ENCODE measurements at regions of chr19 and their contacts with region 1.

Region 1: GRCh38 chr19:18152444-18152816 is 533 bp upstream of the PIK3R2 start:
- DNase-seq: peak; percentile 98
- H3K4me3 ChIP-seq: peak overlapping the region; percentile 41 to 94 (median 85)
- H3K27ac ChIP-seq: peak overlapping the region; percentile 87 to 98 (median 95)
- H3K4me1 ChIP-seq: peaks cover 0 to 49% (median 43%) of the 10 kb centered on the region in 4 donors
- H3K27me3 ChIP-seq: no peaks in the 10 kb centered on the region
- CTCF ChIP-seq: peak; percentile 52 to 74 (median 60)
- EP300 ChIP-seq: no peak
- POLR2A ChIP-seq: no peak

Region 2: GRCh38 chr19:18083929-18084684 is 68.3 kb before region 1 on chr19:
- intact Hi-C with region 1: no loop called
- DNase-seq: no peak
- H3K4me3 ChIP-seq: no peak overlapping the region
- H3K27ac ChIP-seq: no peak overlapping the region
- H3K4me1 ChIP-seq: no peaks in the 10 kb centered on the region
- H3K27me3 ChIP-seq: no peaks in the 10 kb centered on the region
- CTCF ChIP-seq: no peak
- EP300 ChIP-seq: no peak
- POLR2A ChIP-seq: no peak

Region 3: DNA sequence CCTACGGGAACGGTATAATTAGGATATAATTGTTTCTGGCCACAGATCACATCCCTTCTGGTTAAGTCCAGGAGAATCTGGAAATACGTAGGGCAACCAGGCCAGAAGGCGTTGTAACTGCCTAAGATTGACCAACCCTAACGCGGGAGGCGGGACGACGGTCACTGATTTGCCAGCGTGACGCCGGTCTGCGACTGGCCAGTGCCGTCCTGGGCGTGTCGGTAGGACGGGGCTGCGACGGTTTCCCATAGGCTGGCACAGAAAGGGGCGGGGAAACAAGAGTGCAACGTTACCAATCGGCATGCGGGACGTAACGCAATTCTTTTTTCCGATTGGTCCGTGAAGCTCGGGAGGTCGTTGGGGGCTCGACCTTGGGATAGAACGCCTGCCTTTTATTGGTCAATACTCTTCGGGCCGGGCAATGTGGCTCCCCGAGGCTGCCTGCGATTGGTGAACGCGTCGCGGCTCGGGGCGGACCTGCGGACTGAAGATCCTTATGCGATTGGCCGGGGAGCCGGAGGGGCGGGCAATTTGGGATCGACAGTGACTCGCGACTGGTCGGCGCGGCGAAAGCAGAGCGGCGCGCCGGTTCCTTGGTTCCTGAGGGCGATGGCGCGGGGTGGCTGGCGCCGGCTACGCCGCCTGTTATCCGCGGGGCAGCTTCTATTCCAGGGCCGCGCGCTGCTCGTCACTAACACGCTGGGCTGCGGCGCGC is 40.4 kb after region 1 on chr19 and contains the start of gene MPV17L2:
- intact Hi-C with region 1: loop called (anchors 5 kb)
- DNase-seq: peak; percentile 100
- H3K4me3 ChIP-seq: peak within 1 kb of the TSS; percentile 75 to 91 (median 84)
- H3K27ac ChIP-seq: peak within 1 kb of the TSS; percentile 95 to 99 (median 98)
- H3K4me1 ChIP-seq: peaks cover 0 to 31% (median 24%) of the 10 kb centered on the region in 4 donors
- H3K27me3 ChIP-seq: no peaks in the 10 kb centered on the region
- CTCF ChIP-seq: no peak
- EP300 ChIP-seq: no peak
- POLR2A ChIP-seq: peak; percentile 90 to 93
- total RNA-seq, gene MPV17L2: 15.8 to 37.3 (median 26.2) TPM

Region 4: DNA sequence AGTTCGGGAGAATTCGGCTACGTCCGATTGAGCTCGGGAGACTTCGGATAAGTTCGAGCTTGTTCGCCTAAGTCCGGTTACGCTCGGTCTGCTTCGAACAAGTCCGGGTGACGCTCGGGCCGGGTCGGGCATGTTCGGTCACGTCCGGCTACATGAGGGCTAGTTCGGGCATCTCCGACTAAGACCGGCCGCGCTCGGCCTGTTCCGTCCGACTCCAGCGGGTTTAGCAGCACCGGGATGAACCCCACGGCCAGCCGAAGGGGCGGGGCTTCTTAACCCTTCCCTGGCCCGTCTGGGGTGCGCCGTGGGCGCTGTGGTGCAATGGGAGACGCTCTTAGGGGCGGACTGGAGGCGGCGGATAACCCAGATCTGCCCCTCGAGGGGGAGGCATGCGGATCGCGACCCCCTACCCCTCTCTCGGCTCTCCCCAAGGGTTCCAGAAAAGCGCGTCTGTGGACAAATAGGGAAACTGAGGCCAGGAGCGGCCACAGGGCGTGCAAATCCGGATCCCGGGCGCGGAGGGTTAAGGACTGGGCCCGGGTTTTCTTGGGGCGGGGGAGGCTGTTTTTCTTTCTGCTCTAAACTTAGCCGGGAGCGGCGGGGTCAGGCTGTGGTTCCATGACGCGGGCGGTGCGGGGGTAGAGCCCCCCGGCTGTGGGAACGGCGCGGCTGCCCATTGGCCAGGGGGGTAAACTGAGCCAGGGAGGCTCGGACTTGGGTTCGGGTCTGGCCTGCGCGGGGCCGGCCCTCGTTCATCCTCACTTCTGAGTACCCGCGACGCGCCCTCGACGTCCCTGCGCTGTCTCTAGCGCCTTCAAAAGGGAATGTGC is 72.3 kb after region 1 on chr19:
- intact Hi-C with region 1: loop called (anchors 2 kb)
- DNase-seq: peak; percentile 100
- H3K4me3 ChIP-seq: peak overlapping the region; percentile 21 to 49 (median 38)
- H3K27ac ChIP-seq: peak overlapping the region; percentile 4 to 72 (median 44)
- H3K4me1 ChIP-seq: peaks cover 0 to 44% (median 36%) of the 10 kb centered on the region in 4 donors
- H3K27me3 ChIP-seq: peaks cover 0 to 53% (median 31%) of the 10 kb centered on the region in 3 donors
- CTCF ChIP-seq: no peak
- EP300 ChIP-seq: no peak
- POLR2A ChIP-seq: no peak

Measured in sigmoid colon (tissue), 7 donors.